PC-3 (cell line): ENCODE measurements at regions of chr3 and their contacts with region 1.

Region 1: DNA sequence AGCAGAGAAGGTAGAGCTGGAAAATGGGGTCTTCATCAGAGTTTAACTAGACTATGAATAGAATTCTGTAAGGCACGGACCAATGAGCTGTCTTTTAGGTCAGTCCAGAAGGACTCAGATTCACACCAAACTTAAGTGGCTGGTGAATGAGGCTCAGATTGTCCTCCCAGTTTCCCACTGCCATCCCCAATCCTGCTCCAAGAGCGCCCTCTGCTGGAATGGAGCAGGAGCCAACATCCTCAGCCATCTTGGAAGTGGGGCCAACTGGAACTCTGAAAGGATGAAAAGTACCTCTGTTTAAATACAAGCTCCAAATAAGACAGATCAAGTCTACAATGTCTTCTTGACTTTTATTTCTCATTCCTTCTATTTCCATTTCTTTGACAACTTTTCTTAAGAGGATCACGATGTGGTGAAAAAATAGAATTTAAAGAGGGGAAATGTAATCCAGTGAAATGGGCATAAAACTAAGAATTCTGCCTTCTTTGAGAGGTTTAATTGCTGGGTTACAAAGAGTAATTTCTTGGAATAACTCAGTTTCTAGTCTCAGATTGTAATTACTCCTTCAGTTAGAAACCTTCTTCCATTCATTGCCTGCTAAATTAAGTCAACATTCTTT is 217.1 kb upstream of the TPRG1 start:
- DNase-seq: peak; percentile 92
- ATAC-seq: peak; percentile 50; the same call in 1 of the 2 replicates
- H3K4me3 ChIP-seq: no peak overlapping the region
- H3K27ac ChIP-seq: no peak overlapping the region
- H3K4me1 ChIP-seq: peaks cover 20% of the 10 kb centered on the region
- H3K27me3 ChIP-seq: no peaks in the 10 kb centered on the region
- CTCF ChIP-seq: peak; percentile 98

Region 2: DNA sequence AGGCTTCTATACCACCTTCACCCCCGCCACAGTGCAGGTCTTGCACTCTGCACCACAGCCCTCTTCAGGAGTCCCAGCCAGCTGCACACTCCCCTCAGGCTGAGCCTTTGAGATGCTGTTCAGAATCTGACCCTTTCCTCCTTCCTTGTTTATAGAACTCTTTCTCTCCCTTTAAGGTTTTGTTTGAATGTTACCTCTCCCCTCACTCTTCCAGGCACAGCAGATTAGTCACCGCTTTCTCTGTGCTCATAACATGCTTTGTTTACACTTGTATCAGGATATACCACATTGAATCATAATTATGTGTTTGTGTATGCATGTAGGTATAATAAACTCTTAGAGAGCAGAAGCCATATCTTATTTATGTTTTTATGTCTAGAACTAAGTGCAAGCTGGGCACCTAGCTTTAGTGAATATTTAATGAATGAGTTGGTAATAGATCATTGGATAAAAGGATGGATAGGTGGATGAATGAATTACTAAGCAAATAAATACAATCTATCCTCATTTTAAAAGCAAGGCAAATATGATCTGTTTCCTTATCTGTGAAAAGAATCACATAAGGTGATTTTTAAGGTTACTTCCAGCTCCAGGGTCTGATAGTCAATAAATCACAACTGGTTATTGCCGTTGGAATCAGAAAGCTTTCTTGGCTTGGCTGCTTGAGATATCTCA is 1040.9 kb before region 1 on chr3:
- CTCF ChIA-PET with region 1: no interaction called
- POLR2A ChIA-PET with region 1: no interaction called
- intact Hi-C with region 1: loop called (anchors 5 kb)
- DNase-seq: peak; percentile 93
- ATAC-seq: peak; percentile 88
- H3K4me3 ChIP-seq: peak overlapping the region; percentile 47
- H3K27ac ChIP-seq: peak overlapping the region; percentile 91
- H3K4me1 ChIP-seq: peaks cover 48% of the 10 kb centered on the region
- H3K27me3 ChIP-seq: no peaks in the 10 kb centered on the region
- CTCF ChIP-seq: no peak

Region 3: DNA sequence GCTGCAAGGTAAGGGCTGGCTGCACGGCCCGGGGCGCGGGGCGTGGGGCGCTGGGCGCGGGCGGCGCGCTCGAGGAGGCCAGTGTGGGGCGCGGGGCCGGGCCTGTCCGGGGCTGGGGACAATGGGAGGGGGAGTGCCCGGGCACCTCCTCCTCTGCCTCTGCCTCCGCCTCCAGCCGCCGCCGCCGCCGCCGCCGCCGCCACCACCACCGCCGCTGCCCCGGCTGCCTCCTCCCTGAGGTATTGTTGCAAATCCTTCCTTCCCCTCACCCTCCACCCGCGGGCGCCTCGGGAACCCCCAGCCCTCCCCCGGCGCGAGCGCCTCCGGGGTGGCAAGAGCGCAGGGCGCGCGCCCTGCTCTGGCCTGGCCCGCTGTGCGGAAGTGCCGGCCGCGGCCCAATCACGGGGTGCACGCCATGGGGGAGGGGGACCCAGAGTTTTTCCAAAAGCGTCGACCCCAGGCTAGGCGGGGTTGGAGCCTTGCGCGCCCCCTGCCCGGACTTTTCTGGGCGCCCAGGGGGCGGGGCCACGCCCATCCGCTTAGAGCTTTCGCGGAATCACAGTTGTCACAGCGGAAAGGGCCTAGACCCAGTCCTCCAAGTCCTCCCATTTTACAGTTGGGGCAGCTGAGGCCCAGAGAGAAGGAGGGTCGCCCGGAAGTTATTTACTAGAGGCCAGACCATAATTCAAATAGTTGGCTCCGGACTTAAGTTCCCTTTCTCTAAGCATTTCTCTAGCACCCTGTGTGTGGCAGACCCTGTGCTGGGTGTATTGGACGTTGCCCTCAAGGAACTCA is 800.5 kb before region 1 on chr3 and contains the start of gene LPP:
- CTCF ChIA-PET with region 1: no interaction called
- POLR2A ChIA-PET with region 1: no interaction called
- intact Hi-C with region 1: loop called (anchors 5 kb)
- DNase-seq: peak; percentile 58
- ATAC-seq: peak; percentile 82
- H3K4me3 ChIP-seq: peak within 1 kb of the TSS; percentile 97
- H3K27ac ChIP-seq: peak within 1 kb of the TSS; percentile 88
- H3K4me1 ChIP-seq: peaks cover 29% of the 10 kb centered on the region
- H3K27me3 ChIP-seq: no peaks in the 10 kb centered on the region
- CTCF ChIP-seq: 0 out of 2 replicates have a peak, but pooled peaks have one; percentile 14
- total RNA-seq, gene LPP: 20.4 and 21.3 TPM in 2 replicates

Region 4: DNA sequence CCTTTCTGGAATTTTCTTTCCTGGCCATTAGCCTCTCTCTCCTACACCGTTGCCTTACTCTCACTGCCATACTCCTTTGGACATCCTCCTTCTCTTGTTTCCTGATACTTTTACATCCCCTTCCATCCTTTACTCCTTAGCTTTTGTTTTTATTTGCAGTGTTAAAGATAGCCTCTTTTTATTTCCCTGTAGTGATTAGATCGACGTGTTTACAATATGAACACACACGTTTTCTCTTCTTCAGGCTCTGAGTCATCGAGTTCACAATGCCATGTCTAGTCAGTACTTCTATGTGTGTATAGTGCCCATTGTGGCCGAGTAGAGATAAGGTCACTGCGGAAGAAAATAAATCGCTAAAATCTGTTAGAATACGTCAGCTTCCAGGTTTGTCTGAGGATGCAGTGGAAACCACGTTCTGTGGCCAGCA is 592.3 kb before region 1 on chr3:
- CTCF ChIA-PET with region 1: no interaction called
- POLR2A ChIA-PET with region 1: no interaction called
- intact Hi-C with region 1: loop called (anchors 5 kb)
- DNase-seq: peak; percentile 95
- ATAC-seq: peak; percentile 95
- H3K4me3 ChIP-seq: no peak overlapping the region
- H3K27ac ChIP-seq: peak overlapping the region; percentile 48
- H3K4me1 ChIP-seq: peaks cover 29% of the 10 kb centered on the region
- H3K27me3 ChIP-seq: no peaks in the 10 kb centered on the region
- CTCF ChIP-seq: peak; percentile 58

Region 5: GRCh38 chr3:188539631-188540194 is 415.0 kb before region 1 on chr3:
- CTCF ChIA-PET with region 1: no interaction called
- POLR2A ChIA-PET with region 1: no interaction called
- intact Hi-C with region 1: loop called (anchors 5 kb)
- DNase-seq: no peak
- ATAC-seq: no peak
- H3K4me3 ChIP-seq: no peak overlapping the region
- H3K27ac ChIP-seq: no peak overlapping the region
- H3K4me1 ChIP-seq: peaks cover 27% of the 10 kb centered on the region
- H3K27me3 ChIP-seq: no peaks in the 10 kb centered on the region
- CTCF ChIP-seq: no peak

Region 6: DNA sequence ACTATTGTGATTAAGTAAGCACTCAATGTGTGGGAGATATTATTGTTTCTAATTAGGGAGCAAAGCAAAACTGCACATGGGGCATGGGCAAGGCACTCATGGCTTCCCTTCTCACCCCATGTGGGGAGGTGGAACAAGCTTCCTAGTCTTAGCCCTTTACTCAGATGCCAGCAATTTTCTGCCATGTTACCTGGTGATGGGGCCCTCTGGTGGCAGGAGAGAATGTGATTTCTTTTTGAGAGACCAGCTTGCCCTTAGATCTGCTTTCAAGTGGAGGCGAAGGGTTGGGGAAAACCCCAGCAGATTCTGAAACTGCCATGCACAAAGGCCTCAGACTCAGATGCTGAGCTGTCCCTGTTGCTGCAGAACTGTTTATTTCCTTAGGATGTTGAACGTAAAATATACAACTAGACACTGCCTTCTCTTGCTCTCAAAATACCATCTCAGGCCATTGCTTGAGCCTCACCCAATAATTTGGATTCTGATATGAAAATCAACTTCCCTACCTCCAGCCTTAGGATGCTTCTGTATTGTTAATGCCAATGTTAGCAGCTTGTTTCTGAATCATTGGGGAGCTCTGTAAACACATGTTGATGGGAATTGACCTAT is 86.9 kb after region 1 on chr3:
- CTCF ChIA-PET with region 1: no interaction called
- POLR2A ChIA-PET with region 1: no interaction called
- intact Hi-C with region 1: loop called (anchors 2 kb)
- DNase-seq: peak; percentile 75
- ATAC-seq: peak; percentile 84
- H3K4me3 ChIP-seq: no peak overlapping the region
- H3K27ac ChIP-seq: no peak overlapping the region
- H3K4me1 ChIP-seq: no peaks in the 10 kb centered on the region
- H3K27me3 ChIP-seq: no peaks in the 10 kb centered on the region
- CTCF ChIP-seq: peak; percentile 86

Region 7: DNA sequence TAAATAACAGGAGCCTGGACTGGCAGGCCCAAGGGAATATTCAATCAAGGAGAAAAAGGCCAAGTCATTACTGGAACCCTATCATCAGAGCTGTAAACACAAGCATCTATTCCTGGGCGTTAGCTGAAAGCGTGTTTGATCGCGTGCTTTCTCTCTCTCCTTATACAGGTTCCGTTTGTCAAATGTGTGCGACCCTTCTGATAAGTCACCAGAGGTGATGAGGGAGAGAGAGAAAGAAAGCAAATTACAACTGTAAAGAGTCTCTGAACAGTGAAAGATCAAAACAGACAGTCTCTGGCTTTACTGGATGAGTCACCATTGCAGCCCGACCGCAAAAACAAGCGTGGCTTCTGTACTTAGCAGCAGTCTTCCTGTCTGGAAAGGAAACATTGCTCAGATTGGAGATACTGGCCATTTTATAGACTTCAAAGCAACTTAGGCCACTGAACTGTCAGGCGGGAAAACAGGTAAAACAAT is 177.6 kb after region 1 on chr3:
- CTCF ChIA-PET with region 1: no interaction called
- POLR2A ChIA-PET with region 1: no interaction called
- intact Hi-C with region 1: no loop called
- DNase-seq: peak; percentile 92
- ATAC-seq: peak; percentile 100
- H3K4me3 ChIP-seq: peak overlapping the region; percentile 26; the same call in 1 of the 2 replicates
- H3K27ac ChIP-seq: peak overlapping the region; percentile 11; the same call in 1 of the 2 replicates
- H3K4me1 ChIP-seq: peaks cover 15% of the 10 kb centered on the region
- H3K27me3 ChIP-seq: no peaks in the 10 kb centered on the region
- CTCF ChIP-seq: no peak

Region 8: DNA sequence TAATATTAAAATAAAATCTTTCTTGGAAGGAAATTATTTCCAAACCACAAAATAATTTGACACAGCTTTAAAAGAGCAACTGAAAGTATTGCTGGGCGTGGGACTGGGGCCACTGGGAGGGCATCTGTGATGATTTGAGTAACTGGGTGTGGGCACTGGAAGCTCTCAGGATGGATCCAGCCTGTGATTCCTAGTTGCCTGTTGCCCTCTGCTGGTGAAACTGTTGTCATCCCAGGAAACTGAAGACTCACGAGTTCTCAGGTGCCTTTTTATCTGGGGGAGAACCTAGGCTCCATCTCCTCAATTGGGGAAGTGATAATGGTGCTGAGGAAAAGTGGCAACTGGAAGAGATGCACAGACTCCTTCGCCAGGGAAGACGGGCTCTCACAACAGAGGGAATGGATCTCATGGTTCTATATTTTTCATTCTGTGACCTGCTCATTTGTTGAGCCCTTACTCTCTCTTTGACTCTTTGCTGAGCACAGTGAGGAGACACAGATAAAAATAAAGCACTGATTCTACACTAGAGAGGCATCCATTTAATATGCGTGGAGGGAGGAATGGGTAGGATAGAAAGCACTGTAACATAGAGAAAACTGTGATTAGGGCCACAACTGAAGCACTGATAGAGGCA is 278.6 kb after region 1 on chr3:
- CTCF ChIA-PET with region 1: no interaction called
- POLR2A ChIA-PET with region 1: no interaction called
- intact Hi-C with region 1: loop called (anchors 5 kb)
- DNase-seq: peak; percentile 84
- ATAC-seq: peak; percentile 98
- H3K4me3 ChIP-seq: no peak overlapping the region
- H3K27ac ChIP-seq: no peak overlapping the region
- H3K4me1 ChIP-seq: no peaks in the 10 kb centered on the region
- H3K27me3 ChIP-seq: no peaks in the 10 kb centered on the region
- CTCF ChIP-seq: peak; percentile 88